PC-3 (cell line): ENCODE measurements at regions of chr15 and their contacts with region 1.

Region 1: GRCh38 chr15:39184701-39185390 is 396.0 kb upstream of the THBS1 start:
- DNase-seq: peak; percentile 94
- ATAC-seq: peak; percentile 76
- H3K4me3 ChIP-seq: no peak overlapping the region
- H3K27ac ChIP-seq: peak overlapping the region; percentile 96
- H3K4me1 ChIP-seq: peaks cover 71% of the 10 kb centered on the region
- H3K27me3 ChIP-seq: no peaks in the 10 kb centered on the region
- CTCF ChIP-seq: no peak

Region 2: DNA sequence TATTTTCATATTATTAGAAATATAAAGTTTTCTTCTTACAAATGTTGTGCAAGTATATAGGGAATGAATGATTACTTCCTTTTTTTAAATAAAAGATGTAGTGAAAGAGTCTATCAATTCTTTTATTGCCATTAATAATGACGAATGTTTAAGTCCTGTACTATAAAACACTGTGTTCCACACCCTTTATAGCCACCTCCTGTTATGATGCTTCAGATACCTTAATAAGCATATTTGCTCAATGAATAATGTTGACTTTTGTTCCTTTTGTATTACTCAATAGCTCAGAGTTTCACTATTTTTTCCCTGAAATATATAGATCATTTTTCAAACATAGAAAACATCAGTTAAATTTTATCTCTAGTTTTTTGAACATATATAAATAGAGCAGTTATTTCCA is 17.8 kb after region 1 on chr15:
- CTCF ChIA-PET with region 1: no interaction called
- POLR2A ChIA-PET with region 1: no interaction called
- intact Hi-C with region 1: loop called (anchors 2 kb)
- DNase-seq: peak; percentile 89
- ATAC-seq: peak; percentile 92
- H3K4me3 ChIP-seq: peak overlapping the region; percentile 13; the same call in 1 of the 2 replicates
- H3K27ac ChIP-seq: peak overlapping the region; percentile 97
- H3K4me1 ChIP-seq: peaks cover 69% of the 10 kb centered on the region
- H3K27me3 ChIP-seq: no peaks in the 10 kb centered on the region
- CTCF ChIP-seq: no peak